ENCODE measurements at regions of chr5 and their contacts with region 1.

Region 1: DNA sequence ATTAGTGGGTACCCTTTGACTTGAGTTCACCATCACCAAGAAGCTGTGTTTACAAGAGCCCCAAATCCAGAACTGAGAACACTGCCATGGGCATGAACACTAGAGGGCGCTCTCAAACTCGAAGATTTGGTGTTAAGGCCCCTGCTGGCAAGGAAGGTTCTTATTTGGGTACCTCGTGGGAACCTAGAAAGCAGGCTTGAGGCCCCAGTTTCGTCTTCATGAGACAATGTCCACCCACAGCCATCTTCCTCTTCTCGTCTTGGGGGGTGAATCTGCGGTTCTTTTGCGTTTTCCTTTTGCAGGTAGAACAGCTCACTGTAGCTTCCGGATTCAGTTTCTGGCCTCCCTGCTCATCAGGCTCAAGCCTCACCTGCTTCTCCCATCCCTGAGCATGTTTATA is 184.0 kb downstream of the SEMA5A start:
- H3K4me3 ChIP-seq: no peak overlapping the region
- H3K27ac ChIP-seq: no peak overlapping the region
- H3K4me1 ChIP-seq: no peaks in the 10 kb centered on the region; the same call in 1 of the 2 replicates
- CTCF ChIP-seq: peak; percentile 28; the same call in 1 of the 2 replicates

Region 2: GRCh38 chr5:9399094-9399493 is 37.3 kb after region 1 on chr5:
- CTCF ChIA-PET with region 1: interaction called, 10 read pairs
- POLR2A ChIA-PET with region 1: no interaction called
- H3K4me3 ChIP-seq: no peak overlapping the region
- H3K27ac ChIP-seq: no peak overlapping the region
- H3K4me1 ChIP-seq: no peaks in the 10 kb centered on the region
- CTCF ChIP-seq: no peak

Region 3: DNA sequence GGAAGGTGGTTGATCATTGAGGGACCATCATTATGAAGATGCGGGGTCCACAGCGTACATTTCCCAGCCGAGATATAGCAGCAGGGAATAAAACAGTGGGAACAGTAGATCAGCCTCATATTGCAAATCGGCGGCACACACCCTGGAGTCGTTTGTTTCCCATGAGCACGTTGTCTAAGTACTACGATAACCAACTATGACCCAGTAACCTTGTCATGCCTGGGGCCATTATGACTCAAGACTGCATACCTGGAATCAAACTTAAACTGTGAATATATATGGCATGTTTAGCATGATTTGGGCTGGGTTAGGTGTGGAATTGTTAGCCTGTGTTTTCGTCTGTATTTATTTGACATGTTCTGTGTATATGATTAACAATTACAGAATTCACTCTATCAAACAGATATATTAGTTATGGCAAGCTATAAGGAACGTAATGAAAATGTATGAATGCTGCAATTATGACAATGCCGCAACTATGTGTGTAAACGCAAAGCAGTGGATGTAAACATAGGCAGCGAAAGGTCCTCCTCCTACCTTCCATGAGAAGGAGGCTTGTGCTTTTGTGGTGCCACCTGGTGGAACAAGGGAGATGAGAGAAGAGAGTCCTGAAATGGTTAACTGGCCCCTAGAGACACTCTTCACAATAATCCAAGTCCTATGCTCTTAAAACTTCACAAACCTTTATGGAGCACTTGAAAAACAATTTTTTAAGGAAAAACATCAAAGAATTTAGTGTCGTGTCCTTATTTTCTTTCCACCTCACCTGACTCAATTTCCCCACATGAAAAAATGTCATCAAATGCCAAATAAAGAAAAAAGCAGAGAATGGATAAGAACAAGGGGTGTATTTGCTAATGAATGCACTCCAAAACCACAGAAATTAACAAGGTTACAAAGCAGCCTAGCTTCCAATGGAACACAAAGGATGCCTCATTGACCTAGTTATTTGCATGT is 137.0 kb after region 1 on chr5:
- CTCF ChIA-PET with region 1: interaction called, 29 read pairs
- POLR2A ChIA-PET with region 1: no interaction called
- H3K4me3 ChIP-seq: no peak overlapping the region
- H3K27ac ChIP-seq: no peak overlapping the region
- H3K4me1 ChIP-seq: peaks cover 4% of the 10 kb centered on the region; the same call in 1 of the 2 replicates
- CTCF ChIP-seq: no peak

Region 4: GRCh38 chr5:9544502-9545135 is 182.8 kb after region 1 on chr5:
- CTCF ChIA-PET with region 1: interaction called, 13 read pairs
- POLR2A ChIA-PET with region 1: no interaction called
- H3K4me3 ChIP-seq: peak overlapping the region; percentile 66
- H3K27ac ChIP-seq: no peak overlapping the region; the same call in 1 of the 2 replicates
- H3K4me1 ChIP-seq: no peaks in the 10 kb centered on the region; the same call in 1 of the 2 replicates
- CTCF ChIP-seq: no peak